Activated B cell treated with CpG ODN at 0.5 μM for 24 hours (primary cell): ENCODE measurements at regions of chr11 and their contacts with region 1.

Region 1: GRCh38 chr11:61967116-61967923 is at the start of gene FTH1:
- DNase-seq: peak; percentile 93
- ATAC-seq: peak; percentile 63
- H3K4me3 Mint-ChIP-seq: peak within 1 kb of the TSS; percentile 93
- H3K27ac Mint-ChIP-seq: peak within 1 kb of the TSS; percentile 97
- H3K4me1 Mint-ChIP-seq: peaks cover 72% of the 10 kb centered on the region
- H3K27me3 Mint-ChIP-seq: no peaks in the 10 kb centered on the region
- CTCF ChIP-seq: no peak
- total RNA-seq, gene FTH1: 865 and 906 TPM in 2 replicates

Region 2: GRCh38 chr11:60932605-60933356 is 1034.5 kb before region 1 on chr11:
- CTCF ChIA-PET with region 1: no interaction called
- POLR2A ChIA-PET with region 1: no interaction called
- intact Hi-C with region 1: no loop called
- DNase-seq: no peak
- ATAC-seq: peak; percentile 57
- H3K4me3 Mint-ChIP-seq: peak overlapping the region; percentile 66
- H3K27ac Mint-ChIP-seq: peak overlapping the region; percentile 89
- H3K4me1 Mint-ChIP-seq: peaks cover 48% of the 10 kb centered on the region
- H3K27me3 Mint-ChIP-seq: no peaks in the 10 kb centered on the region
- CTCF ChIP-seq: no peak

Region 3: DNA sequence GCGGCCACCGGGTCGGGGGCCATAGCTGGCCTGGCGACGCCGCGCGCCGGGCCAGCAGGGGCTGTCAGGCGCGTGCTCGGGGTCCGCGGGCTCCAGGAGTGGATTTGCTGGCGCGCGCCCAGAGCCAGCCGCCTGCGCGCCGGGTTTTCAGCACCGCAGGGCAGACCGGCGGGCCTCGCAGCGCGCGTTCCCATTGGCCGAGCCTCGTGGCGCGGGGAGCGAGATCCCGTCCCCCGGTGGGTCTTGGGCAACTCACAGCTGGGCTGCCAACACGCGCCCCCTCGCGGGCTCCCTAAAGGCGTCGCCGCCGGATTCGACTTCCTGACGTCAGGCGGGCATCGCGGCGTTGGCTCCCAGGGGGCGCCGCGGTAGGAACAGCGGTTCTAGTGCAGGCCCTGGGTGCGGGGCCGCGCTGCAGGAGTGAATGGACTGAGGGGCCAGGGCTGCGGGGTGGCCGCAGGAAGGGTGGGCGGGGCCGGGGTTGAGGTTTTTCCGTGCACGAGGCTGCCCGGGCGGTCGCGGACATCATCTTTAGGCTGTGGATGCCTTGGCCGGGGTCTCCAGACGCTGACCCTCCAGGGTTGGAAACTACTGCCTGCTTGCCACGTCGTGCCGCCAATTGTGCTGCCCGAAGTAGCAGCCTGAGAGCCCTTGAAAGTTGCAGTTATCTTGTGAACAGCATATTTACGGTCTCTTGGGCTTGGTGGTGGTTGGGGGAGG is 150.4 kb before region 1 on chr11 and contains the start of gene FADS1:
- CTCF ChIA-PET with region 1: no interaction called
- POLR2A ChIA-PET with region 1: interaction called, 42 read pairs
- intact Hi-C with region 1: loop called (anchors 2 kb)
- DNase-seq: peak; percentile 75
- ATAC-seq: peak; percentile 63
- H3K4me3 Mint-ChIP-seq: peak within 1 kb of the TSS; percentile 92
- H3K27ac Mint-ChIP-seq: peak within 1 kb of the TSS; percentile 72
- H3K4me1 Mint-ChIP-seq: peaks cover 16% of the 10 kb centered on the region
- H3K27me3 Mint-ChIP-seq: peaks cover 4% of the 10 kb centered on the region
- CTCF ChIP-seq: no peak
- total RNA-seq, gene FADS1: 19.6 and 23.3 TPM in 2 replicates

Region 4: DNA sequence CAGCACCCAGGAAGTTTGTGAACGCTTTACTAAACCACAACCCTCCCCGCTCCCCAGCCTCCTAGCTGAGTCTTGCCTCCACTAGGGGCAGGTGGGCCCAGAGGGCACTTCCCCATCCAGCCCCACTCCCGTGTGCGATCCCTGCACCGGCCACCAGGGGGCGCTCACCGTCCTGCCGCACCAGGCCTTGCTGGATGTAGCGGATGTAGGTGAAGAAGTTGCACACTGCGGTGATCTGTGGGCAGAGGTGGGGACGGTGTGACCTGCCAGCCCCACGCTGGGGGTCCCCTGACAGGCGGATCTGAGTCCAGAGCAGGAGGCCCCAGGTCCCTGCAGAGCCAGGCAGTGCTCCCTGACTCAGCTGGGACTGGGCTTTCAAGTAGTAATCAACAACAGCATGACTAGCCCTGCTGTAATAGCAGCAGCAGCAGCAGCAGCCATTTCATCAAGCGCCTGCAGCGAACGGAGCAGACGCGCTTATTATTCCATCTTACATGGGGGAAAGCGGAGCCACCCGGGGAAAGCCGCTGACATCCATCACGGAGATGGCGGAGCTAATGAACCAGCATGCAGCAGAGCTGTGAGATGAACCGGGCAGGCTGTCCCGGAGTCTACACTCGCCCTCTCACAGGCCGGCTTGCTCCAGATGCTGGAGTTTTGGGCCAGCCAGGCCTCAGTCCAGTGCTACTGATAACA is 68.0 kb before region 1 on chr11:
- CTCF ChIA-PET with region 1: interaction called, 22 read pairs
- POLR2A ChIA-PET with region 1: interaction called, 4 read pairs
- intact Hi-C with region 1: loop called (anchors 1 kb)
- DNase-seq: peak; percentile 97
- ATAC-seq: peak; percentile 99
- H3K4me3 Mint-ChIP-seq: no peak overlapping the region
- H3K27ac Mint-ChIP-seq: peak overlapping the region; percentile 50
- H3K4me1 Mint-ChIP-seq: peaks cover 22% of the 10 kb centered on the region
- H3K27me3 Mint-ChIP-seq: no peaks in the 10 kb centered on the region
- CTCF ChIP-seq: peak; percentile 90

Region 5: GRCh38 chr11:61913699-61914395 is 53.5 kb before region 1 on chr11:
- CTCF ChIA-PET with region 1: no interaction called
- POLR2A ChIA-PET with region 1: no interaction called
- intact Hi-C with region 1: no loop called
- DNase-seq: peak; percentile 9
- ATAC-seq: no peak
- H3K4me3 Mint-ChIP-seq: no peak overlapping the region
- H3K27ac Mint-ChIP-seq: no peak overlapping the region
- H3K4me1 Mint-ChIP-seq: peaks cover 9% of the 10 kb centered on the region
- H3K27me3 Mint-ChIP-seq: peaks cover 37% of the 10 kb centered on the region
- CTCF ChIP-seq: no peak

Region 6: GRCh38 chr11:61978703-61979661 is 11.7 kb after region 1 on chr11:
- CTCF ChIA-PET with region 1: interaction called, 3 read pairs
- POLR2A ChIA-PET with region 1: interaction called, 24 read pairs
- intact Hi-C with region 1: loop called (anchors 2 kb)
- DNase-seq: no peak
- ATAC-seq: no peak
- H3K4me3 Mint-ChIP-seq: no peak overlapping the region
- H3K27ac Mint-ChIP-seq: no peak overlapping the region
- H3K4me1 Mint-ChIP-seq: peaks cover 5% of the 10 kb centered on the region
- H3K27me3 Mint-ChIP-seq: no peaks in the 10 kb centered on the region
- CTCF ChIP-seq: no peak

Region 7: DNA sequence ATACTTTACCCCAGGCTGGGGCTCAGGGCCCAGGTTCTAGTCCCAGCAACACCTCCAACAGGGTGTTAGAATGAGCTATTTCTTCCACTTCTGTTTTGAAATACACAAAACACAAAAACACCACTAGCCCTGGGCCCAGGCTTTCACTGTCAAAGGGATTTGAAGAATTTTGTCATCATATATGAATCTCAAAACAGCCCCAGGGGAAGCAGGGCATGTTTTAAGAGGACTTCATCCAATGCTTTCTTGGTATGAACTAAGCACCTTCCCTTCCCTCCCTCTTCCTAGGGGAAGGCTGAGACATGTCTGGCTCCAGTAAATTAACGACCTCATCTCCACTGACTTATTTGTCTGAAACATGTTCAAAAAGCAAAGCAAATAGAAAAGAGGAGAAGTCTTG is 80.7 kb after region 1 on chr11:
- CTCF ChIA-PET with region 1: no interaction called
- POLR2A ChIA-PET with region 1: no interaction called
- intact Hi-C with region 1: loop called (anchors 2 kb)
- DNase-seq: no peak
- ATAC-seq: no peak
- H3K4me3 Mint-ChIP-seq: no peak overlapping the region
- H3K27ac Mint-ChIP-seq: no peak overlapping the region
- H3K4me1 Mint-ChIP-seq: peaks cover 13% of the 10 kb centered on the region
- H3K27me3 Mint-ChIP-seq: peaks cover 24% of the 10 kb centered on the region
- CTCF ChIP-seq: no peak

Region 8: GRCh38 chr11:62556108-62556871 is 589.0 kb after region 1 on chr11:
- CTCF ChIA-PET with region 1: no interaction called
- POLR2A ChIA-PET with region 1: interaction called, 5 read pairs
- intact Hi-C with region 1: loop called (anchors 5 kb)
- DNase-seq: peak; percentile 64
- ATAC-seq: peak; percentile 35
- H3K4me3 Mint-ChIP-seq: peak overlapping the region; percentile 81
- H3K27ac Mint-ChIP-seq: peak overlapping the region; percentile 99
- H3K4me1 Mint-ChIP-seq: peaks cover 87% of the 10 kb centered on the region
- H3K27me3 Mint-ChIP-seq: no peaks in the 10 kb centered on the region
- CTCF ChIP-seq: no peak